Gastrocnemius medialis (tissue), 4 donors: ENCODE measurements at regions of chr4 and their contacts with region 1.

Region 1: DNA sequence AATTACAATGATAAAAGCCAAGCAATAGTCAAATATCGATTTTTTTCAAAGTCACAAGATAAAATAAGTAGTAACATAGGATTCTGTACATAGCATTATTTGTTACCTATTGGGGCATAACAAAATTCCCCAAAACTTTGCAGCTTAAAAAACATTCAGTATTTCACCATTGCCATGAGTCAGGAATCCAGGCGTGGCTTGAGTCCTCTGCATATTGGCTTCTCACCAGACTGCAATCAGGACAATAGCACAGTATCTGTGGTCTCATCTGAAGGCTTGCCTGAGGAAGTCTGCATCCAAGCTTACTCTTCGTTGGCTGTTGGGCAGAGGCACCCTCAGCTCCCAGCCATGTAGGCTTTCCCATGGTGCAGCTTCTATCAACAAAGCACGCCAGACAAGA is 6.2 kb upstream of the CTBP1 start:
- DNase-seq: no peak
- ATAC-seq: no peak
- H3K4me3 ChIP-seq: no peak overlapping the region
- H3K27ac ChIP-seq: no peak overlapping the region
- H3K4me1 ChIP-seq: peaks cover 10 to 35% of the 10 kb centered on the region in 2 donors
- H3K27me3 ChIP-seq: no peaks in the 10 kb centered on the region
- CTCF ChIP-seq: no peak
- POLR2A ChIP-seq: no peak

Region 2: GRCh38 chr4:1329408-1330371 is 74.5 kb after region 1 on chr4:
- in situ Hi-C with region 1: loop called in 1 of 4 experiments (anchors 5 kb)
- intact Hi-C with region 1: no loop called
- DNase-seq: peak in 1 of 2 donors; percentile 45
- ATAC-seq: peak in 1 of 2 donors; percentile 34
- H3K4me3 ChIP-seq: no peak overlapping the region
- H3K27ac ChIP-seq: peak overlapping the region in 3 of 4 donors; percentile 0 to 61 (median 37)
- H3K4me1 ChIP-seq: peaks cover 6 to 9% of the 10 kb centered on the region in 2 donors
- H3K27me3 ChIP-seq: no peaks in the 10 kb centered on the region
- CTCF ChIP-seq: no peak
- POLR2A ChIP-seq: no peak